B cell (primary cell): ENCODE measurements at regions of chr6 and their contacts with region 1.

Region 1: GRCh38 chr6:41591859-41592502 is 45.8 kb downstream of the FOXP4 start:
- DNase-seq: peak; percentile 83
- ATAC-seq: peak; percentile 84
- H3K4me3 ChIP-seq: no peak overlapping the region
- H3K4me3 Mint-ChIP-seq: no peak overlapping the region
- H3K27ac ChIP-seq: no peak overlapping the region
- H3K27ac Mint-ChIP-seq: no peak overlapping the region
- H3K4me1 ChIP-seq: peaks cover 0 to 3% of the 10 kb centered on the region in 2 donors
- H3K4me1 Mint-ChIP-seq: peaks cover 2% of the 10 kb centered on the region
- H3K27me3 ChIP-seq: no peaks in the 10 kb centered on the region
- H3K27me3 Mint-ChIP-seq: no peaks in the 10 kb centered on the region
- CTCF ChIP-seq: peak; percentile 87

Region 2: DNA sequence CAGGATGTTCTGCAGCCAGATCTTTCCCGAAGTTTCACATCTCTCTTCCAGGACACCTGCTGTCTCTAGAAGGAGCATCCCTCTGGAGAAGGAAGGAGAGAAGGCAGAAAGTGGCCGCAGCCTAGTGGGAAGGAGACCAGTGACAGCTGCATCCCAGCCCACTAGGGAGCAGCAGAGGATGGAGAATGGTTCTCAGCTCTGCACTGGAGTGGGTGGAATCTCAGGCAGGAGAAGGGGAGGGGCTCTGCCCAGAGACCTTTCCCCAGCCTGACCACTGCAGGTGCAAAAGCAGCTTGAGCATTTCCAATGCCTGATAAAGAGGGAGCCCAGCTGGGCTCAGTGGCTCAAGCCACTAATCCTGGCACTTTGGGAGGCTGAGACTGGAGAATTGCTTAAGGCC is 224.3 kb before region 1 on chr6:
- CTCF ChIA-PET with region 1: interaction called, 14 read pairs
- POLR2A ChIA-PET with region 1: no interaction called
- intact Hi-C with region 1: loop called (anchors 1 kb)
- DNase-seq: no peak
- ATAC-seq: no peak
- H3K4me3 ChIP-seq: no peak overlapping the region
- H3K4me3 Mint-ChIP-seq: no peak overlapping the region
- H3K27ac ChIP-seq: no peak overlapping the region
- H3K27ac Mint-ChIP-seq: no peak overlapping the region
- H3K4me1 ChIP-seq: peaks cover 16 to 23% of the 10 kb centered on the region in 2 donors
- H3K4me1 Mint-ChIP-seq: peaks cover 22% of the 10 kb centered on the region
- H3K27me3 ChIP-seq: peaks cover 2 to 53% (median 23%) of the 10 kb centered on the region in 4 experiments
- H3K27me3 Mint-ChIP-seq: peaks cover 55% of the 10 kb centered on the region
- CTCF ChIP-seq: no peak

Region 3: GRCh38 chr6:41463062-41463930 is 128.7 kb before region 1 on chr6:
- CTCF ChIA-PET with region 1: interaction called, 181 read pairs
- POLR2A ChIA-PET with region 1: no interaction called
- intact Hi-C with region 1: no loop called
- DNase-seq: peak; percentile 65
- ATAC-seq: peak; percentile 68
- H3K4me3 ChIP-seq: no peak overlapping the region
- H3K4me3 Mint-ChIP-seq: no peak overlapping the region
- H3K27ac ChIP-seq: no peak overlapping the region
- H3K27ac Mint-ChIP-seq: no peak overlapping the region
- H3K4me1 ChIP-seq: peaks cover 8 to 10% of the 10 kb centered on the region in 2 donors
- H3K4me1 Mint-ChIP-seq: peaks cover 11% of the 10 kb centered on the region
- H3K27me3 ChIP-seq: peaks cover 0 to 21% (median 1%) of the 10 kb centered on the region in 4 experiments
- H3K27me3 Mint-ChIP-seq: peaks cover 38% of the 10 kb centered on the region
- CTCF ChIP-seq: peak; percentile 72

Region 4: DNA sequence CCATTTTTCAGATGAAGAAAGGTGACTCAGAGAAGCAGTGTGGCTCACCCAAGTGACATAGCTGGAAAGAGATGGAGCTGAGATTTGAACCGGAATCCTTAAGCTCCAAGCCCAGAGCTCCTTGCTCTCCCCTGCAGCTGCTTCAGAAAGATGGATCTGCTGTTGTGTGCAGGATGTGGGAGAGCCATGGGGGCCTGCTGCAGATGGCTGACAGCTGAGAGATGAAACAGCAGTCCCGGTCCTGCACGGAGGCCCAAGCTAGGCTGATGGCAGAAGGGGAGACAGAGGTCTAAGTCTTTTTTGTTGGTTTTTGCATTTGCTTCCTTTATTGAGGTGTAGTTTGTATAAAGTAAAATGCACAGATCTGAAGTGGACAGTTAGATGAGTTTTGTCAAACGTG is 115.6 kb before region 1 on chr6:
- CTCF ChIA-PET with region 1: no interaction called
- POLR2A ChIA-PET with region 1: no interaction called
- intact Hi-C with region 1: no loop called
- DNase-seq: no peak
- ATAC-seq: no peak
- H3K4me3 ChIP-seq: no peak overlapping the region
- H3K4me3 Mint-ChIP-seq: no peak overlapping the region
- H3K27ac ChIP-seq: no peak overlapping the region
- H3K27ac Mint-ChIP-seq: no peak overlapping the region
- H3K4me1 ChIP-seq: no peaks in the 10 kb centered on the region
- H3K4me1 Mint-ChIP-seq: peaks cover under 1% of the 10 kb centered on the region
- H3K27me3 ChIP-seq: peaks cover 0 to 13% (median 2%) of the 10 kb centered on the region in 4 experiments
- H3K27me3 Mint-ChIP-seq: peaks cover 47% of the 10 kb centered on the region
- CTCF ChIP-seq: no peak

Region 5: DNA sequence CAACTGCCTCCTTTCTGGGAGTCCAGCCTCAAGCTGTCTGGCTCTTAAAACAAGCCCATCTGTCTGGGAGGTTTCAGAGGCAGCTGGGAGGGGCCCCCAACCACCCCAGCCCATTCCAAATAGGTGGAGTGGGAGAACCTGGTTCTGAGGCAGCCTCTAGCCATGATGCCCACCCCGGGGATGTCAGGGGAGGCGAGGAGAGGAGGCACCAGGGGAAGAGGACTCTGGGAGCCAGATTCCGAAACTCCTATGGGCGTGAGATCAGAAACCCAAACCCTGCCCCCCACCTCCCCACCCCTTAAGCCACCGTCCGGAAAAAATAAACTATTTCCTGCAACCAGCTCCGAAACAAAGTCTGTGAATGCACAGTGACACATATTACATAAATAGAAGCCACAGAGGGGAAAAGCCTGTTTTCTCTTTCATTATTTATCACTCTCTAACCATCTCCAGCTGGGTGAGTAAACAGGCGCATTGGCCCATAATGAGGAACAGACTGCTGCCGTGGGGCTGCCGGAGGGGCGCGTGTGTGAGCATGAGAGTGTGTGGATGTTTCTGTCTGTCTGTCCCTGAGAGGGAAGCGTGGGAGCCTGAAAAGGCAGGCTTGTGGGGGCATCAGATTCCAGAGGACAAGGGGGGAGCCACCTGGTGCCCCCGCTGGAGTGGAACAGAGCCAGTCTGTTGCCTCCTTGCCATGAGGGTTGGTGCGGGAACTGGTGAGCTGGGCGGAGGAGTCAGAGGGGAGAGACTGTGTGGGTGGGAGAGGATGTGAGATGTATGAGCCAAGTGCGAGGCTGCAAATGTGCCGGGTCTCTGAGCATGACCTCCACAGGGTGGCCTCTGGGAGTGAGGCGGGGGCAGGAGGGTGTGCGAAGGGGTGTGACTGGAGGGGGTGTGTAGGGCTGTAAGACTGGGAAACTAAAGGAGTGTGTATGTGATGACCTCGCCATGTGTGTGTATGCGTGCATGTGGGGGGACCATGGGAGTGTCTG is 60.1 kb before region 1 on chr6:
- CTCF ChIA-PET with region 1: interaction called, 6 read pairs
- POLR2A ChIA-PET with region 1: interaction called, 6 read pairs
- intact Hi-C with region 1: loop called (anchors 1 kb)
- DNase-seq: peak; percentile 86
- ATAC-seq: peak; percentile 82
- H3K4me3 ChIP-seq: peak overlapping the region in 4 of 5 experiments; percentile 29 to 48 (median 40)
- H3K4me3 Mint-ChIP-seq: peak overlapping the region; percentile 81
- H3K27ac ChIP-seq: peak overlapping the region; percentile 80 to 87
- H3K27ac Mint-ChIP-seq: peak overlapping the region; percentile 94
- H3K4me1 ChIP-seq: peaks cover 40 to 56% of the 10 kb centered on the region in 2 donors
- H3K4me1 Mint-ChIP-seq: peaks cover 68% of the 10 kb centered on the region
- H3K27me3 ChIP-seq: peaks cover 0 to 2% (median 0%) of the 10 kb centered on the region in 4 experiments
- H3K27me3 Mint-ChIP-seq: peaks cover 6% of the 10 kb centered on the region
- CTCF ChIP-seq: no peak

Region 6: DNA sequence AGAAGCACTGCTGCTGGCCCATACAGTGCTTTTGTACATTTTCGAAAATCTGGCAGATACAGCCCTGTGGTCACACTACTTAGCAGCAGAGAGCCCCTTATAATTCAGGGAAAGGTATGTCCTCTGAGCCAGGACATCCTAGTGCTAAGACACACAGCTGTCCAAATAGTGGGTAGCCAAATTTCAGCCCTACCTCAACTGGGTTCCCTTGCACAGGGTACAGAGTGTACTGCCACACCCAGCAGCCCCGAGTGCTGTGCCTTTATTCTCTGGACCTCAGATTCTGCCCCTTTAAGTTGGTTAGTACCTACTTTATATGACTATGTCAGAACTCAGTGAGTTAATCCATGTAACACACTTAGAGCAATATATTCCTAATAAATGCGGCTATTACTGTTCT is 1082.8 kb after region 1 on chr6:
- CTCF ChIA-PET with region 1: no interaction called
- POLR2A ChIA-PET with region 1: no interaction called
- intact Hi-C with region 1: no loop called
- DNase-seq: no peak
- ATAC-seq: no peak
- H3K4me3 ChIP-seq: no peak overlapping the region
- H3K4me3 Mint-ChIP-seq: no peak overlapping the region
- H3K27ac ChIP-seq: no peak overlapping the region
- H3K27ac Mint-ChIP-seq: no peak overlapping the region
- H3K4me1 ChIP-seq: no peaks in the 10 kb centered on the region
- H3K4me1 Mint-ChIP-seq: no peaks in the 10 kb centered on the region
- H3K27me3 ChIP-seq: no peaks in the 10 kb centered on the region
- H3K27me3 Mint-ChIP-seq: no peaks in the 10 kb centered on the region
- CTCF ChIP-seq: no peak